Left cardiac atrium (tissue), 4 donors: ENCODE measurements at regions of chr5 and their contacts with region 1.

Region 1: GRCh38 chr5:112064956-112065355 is 308.0 kb upstream of the NREP start:
- DNase-seq: no peak
- ATAC-seq: no peak

Region 2: DNA sequence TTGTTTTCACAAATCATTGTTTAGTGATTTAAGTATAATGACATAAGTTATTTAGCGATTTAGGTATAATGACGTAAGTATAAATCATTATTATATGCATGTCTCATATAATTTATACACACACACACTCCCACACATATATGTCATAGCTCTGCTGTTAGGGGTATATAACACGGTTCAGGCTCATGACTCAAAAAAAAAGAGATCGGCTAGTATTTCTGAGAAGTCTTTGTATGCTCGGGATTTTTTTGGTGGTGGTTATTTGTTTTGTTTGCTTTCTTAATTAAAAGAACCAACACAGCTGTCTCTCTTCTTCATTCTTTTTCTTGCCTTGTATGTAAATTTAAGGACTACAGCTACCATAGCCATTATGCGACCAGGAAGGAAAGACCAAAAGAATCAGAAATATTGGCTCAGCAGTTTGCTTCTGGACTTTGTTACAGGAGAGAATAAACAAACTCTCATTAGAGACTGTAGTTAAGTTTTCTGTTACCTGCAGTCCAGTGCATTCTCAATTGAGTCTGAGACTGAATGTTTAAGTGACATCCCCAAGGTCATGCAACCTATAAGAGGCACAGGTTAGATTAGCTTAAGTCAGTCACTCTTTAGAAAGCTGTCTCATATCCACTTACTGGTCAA is 224.8 kb before region 1 on chr5:
- intact Hi-C with region 1: loop called in 1 of 2 experiments (anchors 5 kb)
- DNase-seq: no peak
- ATAC-seq: no peak

Region 3: GRCh38 chr5:111914966-111915636 is 149.9 kb before region 1 on chr5:
- intact Hi-C with region 1: no loop called
- DNase-seq: no peak
- ATAC-seq: no peak